ENCODE measurements at regions of chr3 and their contacts with region 1.

Region 1: GRCh38 chr3:25648107-25648535 is 16.6 kb downstream of the TOP2B start:
- DNase-seq: no peak
- H3K4me3 ChIP-seq: no peak overlapping the region
- H3K27ac ChIP-seq: peak overlapping the region in 1 of 8 donors; percentile 8
- H3K4me1 ChIP-seq: peaks cover under 1 to 61% (median 25%) of the 10 kb centered on the region in 6 donors
- H3K27me3 ChIP-seq: no peaks in the 10 kb centered on the region
- CTCF ChIP-seq: peak; percentile 76 to 94 (median 88)
- POLR2A ChIP-seq: no peak

Region 2: GRCh38 chr3:25372167-25372566 is 276.0 kb before region 1 on chr3:
- intact Hi-C with region 1: no loop called
- DNase-seq: no peak
- H3K4me3 ChIP-seq: no peak overlapping the region
- H3K27ac ChIP-seq: no peak overlapping the region
- H3K4me1 ChIP-seq: no peaks in the 10 kb centered on the region
- H3K27me3 ChIP-seq: no peaks in the 10 kb centered on the region
- CTCF ChIP-seq: no peak
- POLR2A ChIP-seq: no peak

Region 3: GRCh38 chr3:25856902-25857518 is 208.9 kb after region 1 on chr3:
- intact Hi-C with region 1: loop called (anchors 5 kb)
- DNase-seq: no peak
- H3K4me3 ChIP-seq: no peak overlapping the region
- H3K27ac ChIP-seq: no peak overlapping the region
- H3K4me1 ChIP-seq: no peaks in the 10 kb centered on the region
- H3K27me3 ChIP-seq: no peaks in the 10 kb centered on the region
- CTCF ChIP-seq: peak; percentile 38 to 85 (median 73)
- POLR2A ChIP-seq: no peak